Head of caudate nucleus (tissue), 42 donors: ENCODE measurements at regions of chr14 and their contacts with region 1.

Region 1: GRCh38 chr14:64503478-64504309 is at the start of gene ZBTB25:
- DNase-seq: peak; percentile 76 to 97 (median 92)

Region 2: DNA sequence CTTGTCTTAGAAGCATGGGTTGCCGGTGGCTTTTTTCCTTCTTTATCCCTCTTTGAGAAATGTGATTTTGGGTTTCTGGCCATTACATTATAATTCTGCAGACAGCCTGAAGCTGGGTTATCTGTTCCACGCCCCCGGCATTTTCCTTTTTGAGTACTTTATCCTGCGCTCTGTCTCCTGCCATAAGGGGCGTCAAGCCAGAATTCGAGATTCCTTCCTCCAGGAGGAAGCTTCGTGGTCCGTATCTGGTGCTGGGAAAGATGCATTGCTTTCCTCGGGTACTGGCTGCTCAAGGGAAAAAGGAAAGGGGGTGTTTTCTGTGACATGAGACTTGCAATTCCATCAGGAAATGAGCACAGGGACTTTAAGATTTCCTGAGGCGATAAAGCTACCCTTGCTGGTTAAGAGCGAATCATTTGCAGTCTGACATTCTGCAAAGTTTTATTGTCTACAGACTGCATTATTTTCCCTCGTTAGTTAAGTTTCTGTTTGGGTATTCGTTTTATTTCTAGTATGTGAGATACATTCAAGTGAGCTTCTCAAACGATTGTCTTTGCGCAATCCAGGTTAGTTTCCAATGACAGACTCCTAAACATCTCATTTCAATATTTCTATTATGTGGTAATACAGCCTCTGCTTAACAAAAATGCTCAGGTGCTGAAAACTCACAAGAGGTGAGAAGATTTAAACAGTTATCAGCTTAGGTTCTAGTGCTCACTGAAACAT is 37.7 kb before region 1 on chr14:
- intact Hi-C with region 1: loop called (anchors 2 kb)
- DNase-seq: peak in 35 of 42 donors; percentile 10 to 76 (median 40)